ENCODE measurements at regions of chr6 and their contacts with region 1.

Region 1: GRCh38 chr6:89970609-89971337 is 76.5 kb downstream of the GJA10 start:
- DNase-seq: peak; percentile 77
- H3K4me3 ChIP-seq: no peak overlapping the region
- H3K27ac ChIP-seq: no peak overlapping the region
- H3K4me1 ChIP-seq: no peaks in the 10 kb centered on the region
- H3K27me3 ChIP-seq: peaks cover 20% of the 10 kb centered on the region
- CTCF ChIP-seq: peak; percentile 79

Region 2: DNA sequence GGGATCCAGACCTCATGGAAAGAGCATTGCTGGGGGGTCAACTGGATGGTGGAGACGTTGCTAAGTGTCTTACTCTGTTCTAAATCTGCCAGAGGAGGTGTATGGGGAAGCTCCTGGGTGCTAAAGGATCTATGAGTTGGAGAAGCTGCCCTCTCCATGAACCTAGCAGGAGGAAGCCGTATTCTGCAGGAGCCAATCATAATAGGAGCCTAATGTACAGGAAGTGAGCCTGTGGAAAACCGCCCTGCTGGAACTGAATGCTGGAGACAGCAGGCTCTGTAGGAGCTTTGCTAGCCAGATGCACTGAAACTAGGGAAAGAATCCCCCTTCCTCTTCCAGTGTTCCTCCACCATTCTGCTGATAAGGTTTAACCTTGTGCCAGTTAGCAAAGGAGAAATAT is 130.2 kb before region 1 on chr6:
- CTCF ChIA-PET with region 1: no interaction called
- POLR2A ChIA-PET with region 1: no interaction called
- intact Hi-C with region 1: no loop called
- DNase-seq: peak; percentile 65
- H3K4me3 ChIP-seq: no peak overlapping the region
- H3K27ac ChIP-seq: peak overlapping the region; percentile 42
- H3K4me1 ChIP-seq: peaks cover 29% of the 10 kb centered on the region
- H3K27me3 ChIP-seq: no peaks in the 10 kb centered on the region
- CTCF ChIP-seq: no peak

Region 3: DNA sequence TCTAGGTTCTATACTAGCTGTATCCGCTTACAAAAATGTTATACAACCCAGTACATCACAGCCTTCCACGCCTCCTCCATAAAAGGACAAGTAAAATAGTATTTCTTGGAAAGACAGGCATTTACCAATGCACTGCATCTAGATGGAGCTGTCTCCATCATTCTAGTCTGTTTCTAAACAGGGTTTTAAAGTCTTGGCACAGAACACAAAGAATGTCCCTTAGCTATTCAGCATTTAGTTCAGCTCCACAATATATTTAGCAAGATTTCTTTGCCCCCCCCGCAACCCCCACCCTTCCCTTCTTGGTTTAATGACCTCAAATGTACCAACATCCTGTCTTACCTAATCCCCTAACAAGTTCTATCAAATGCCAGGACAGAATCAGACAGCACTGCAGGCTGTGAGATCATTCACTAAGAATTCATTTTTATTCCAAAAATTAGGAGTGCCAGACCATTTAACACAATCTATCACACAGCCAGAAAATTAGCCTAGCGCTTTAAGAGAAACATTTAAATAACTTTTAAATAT is 127.3 kb after region 1 on chr6:
- CTCF ChIA-PET with region 1: no interaction called
- POLR2A ChIA-PET with region 1: no interaction called
- intact Hi-C with region 1: loop called (anchors 10 kb)
- DNase-seq: peak; percentile 87
- H3K4me3 ChIP-seq: no peak overlapping the region
- H3K27ac ChIP-seq: peak overlapping the region; percentile 33
- H3K4me1 ChIP-seq: peaks cover 7% of the 10 kb centered on the region
- H3K27me3 ChIP-seq: no peaks in the 10 kb centered on the region
- CTCF ChIP-seq: peak; percentile 58

Region 4: DNA sequence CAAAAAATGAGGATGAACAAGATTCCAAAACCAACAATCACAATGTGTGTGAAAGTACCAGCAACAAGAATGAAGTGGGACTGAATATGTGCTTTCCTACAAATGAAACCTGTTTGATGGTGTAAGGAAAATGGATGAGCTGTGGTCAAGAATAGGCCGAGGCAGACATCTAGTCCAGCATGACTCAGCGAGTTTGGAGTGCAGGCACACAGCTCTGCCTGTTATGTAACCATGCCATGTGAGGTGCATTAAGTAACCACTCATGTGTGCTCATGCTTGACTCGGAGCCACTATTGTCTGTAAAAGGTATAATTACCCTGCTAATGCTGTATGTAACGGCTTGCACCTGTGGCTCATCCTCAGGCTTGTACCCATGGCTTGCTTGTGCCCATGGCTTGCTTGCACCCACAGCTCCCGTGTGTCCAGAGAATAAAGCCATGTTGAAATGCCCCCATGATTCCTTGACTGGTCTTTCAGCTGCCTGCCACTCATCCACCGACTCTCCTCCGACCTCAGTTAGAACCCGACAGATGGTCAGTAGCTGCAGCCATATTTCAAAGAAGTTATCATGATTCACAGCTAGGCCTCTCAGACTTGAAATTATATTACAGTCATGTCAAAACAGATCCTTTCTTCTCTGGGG is 227.2 kb after region 1 on chr6:
- CTCF ChIA-PET with region 1: no interaction called
- POLR2A ChIA-PET with region 1: no interaction called
- intact Hi-C with region 1: no loop called
- DNase-seq: no peak
- H3K4me3 ChIP-seq: no peak overlapping the region
- H3K27ac ChIP-seq: no peak overlapping the region
- H3K4me1 ChIP-seq: no peaks in the 10 kb centered on the region
- H3K27me3 ChIP-seq: no peaks in the 10 kb centered on the region
- CTCF ChIP-seq: no peak